PC-3 (cell line): ENCODE measurements at regions of chrX and their contacts with region 1.

Region 1: GRCh38 chrX:111244235-111244750 is 26.0 kb downstream of the CAPN6 start:
- DNase-seq: peak; percentile 10
- ATAC-seq: no peak
- H3K4me3 ChIP-seq: no peak overlapping the region
- H3K27ac ChIP-seq: no peak overlapping the region
- H3K4me1 ChIP-seq: no peaks in the 10 kb centered on the region
- H3K27me3 ChIP-seq: peaks cover 24% of the 10 kb centered on the region
- CTCF ChIP-seq: peak; percentile 60; the same call in 1 of the 2 replicates

Region 2: DNA sequence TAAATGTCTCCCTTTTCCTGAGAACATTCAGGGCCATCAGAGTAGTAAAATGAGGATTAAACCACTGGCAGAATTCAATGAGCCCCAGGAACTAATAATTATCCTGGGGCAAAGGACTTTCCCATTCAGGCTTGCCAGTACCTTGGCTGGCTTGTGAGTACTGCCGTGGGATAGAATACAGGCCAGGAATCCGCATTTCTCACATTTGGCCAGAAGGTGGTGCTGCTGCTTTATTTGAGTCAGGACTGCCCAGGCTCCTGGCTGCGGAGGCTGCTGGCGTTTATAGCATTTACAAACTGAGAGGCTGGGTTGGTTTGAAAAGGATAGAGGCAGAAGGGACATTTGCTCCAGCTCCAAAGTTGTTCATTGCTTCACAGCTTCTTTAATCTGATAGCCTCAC is 794.2 kb before region 1 on chrX:
- CTCF ChIA-PET with region 1: no interaction called
- POLR2A ChIA-PET with region 1: no interaction called
- intact Hi-C with region 1: loop called (anchors 5 kb)
- DNase-seq: peak; percentile 81
- ATAC-seq: peak; percentile 99
- H3K4me3 ChIP-seq: no peak overlapping the region
- H3K27ac ChIP-seq: no peak overlapping the region
- H3K4me1 ChIP-seq: no peaks in the 10 kb centered on the region
- H3K27me3 ChIP-seq: peaks cover 50% of the 10 kb centered on the region
- CTCF ChIP-seq: peak; percentile 78

Region 3: DNA sequence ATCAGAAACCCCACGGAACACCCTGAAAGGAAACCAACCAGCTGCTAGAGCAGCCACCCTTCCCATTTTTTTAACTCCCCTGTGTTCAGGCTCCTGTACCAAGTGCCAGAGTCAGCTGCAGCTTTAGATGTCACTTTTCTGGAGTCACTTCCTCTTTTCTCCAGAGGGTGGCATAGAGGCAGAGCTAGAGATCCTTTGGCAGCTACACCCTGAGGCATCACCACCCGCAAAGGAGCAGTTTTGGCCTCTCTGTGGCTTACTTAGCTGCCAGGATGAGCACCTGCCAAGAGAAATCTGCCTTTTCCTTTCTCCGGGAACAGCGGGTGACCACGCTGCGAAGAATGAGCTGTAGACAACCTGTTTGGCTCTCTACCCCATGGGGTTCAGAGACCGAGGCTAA is 390.7 kb before region 1 on chrX:
- CTCF ChIA-PET with region 1: interaction called, 8 read pairs
- POLR2A ChIA-PET with region 1: no interaction called
- intact Hi-C with region 1: loop called (anchors 5 kb)
- DNase-seq: peak; percentile 54
- ATAC-seq: peak; percentile 71
- H3K4me3 ChIP-seq: no peak overlapping the region
- H3K27ac ChIP-seq: no peak overlapping the region
- H3K4me1 ChIP-seq: no peaks in the 10 kb centered on the region
- H3K27me3 ChIP-seq: no peaks in the 10 kb centered on the region
- CTCF ChIP-seq: peak; percentile 53

Region 4: GRCh38 chrX:110992611-110993010 is 251.7 kb before region 1 on chrX:
- CTCF ChIA-PET with region 1: no interaction called
- POLR2A ChIA-PET with region 1: no interaction called
- intact Hi-C with region 1: loop called (anchors 1 kb)
- DNase-seq: peak; percentile 57
- ATAC-seq: peak; percentile 55
- H3K4me3 ChIP-seq: no peak overlapping the region
- H3K27ac ChIP-seq: no peak overlapping the region
- H3K4me1 ChIP-seq: no peaks in the 10 kb centered on the region
- H3K27me3 ChIP-seq: no peaks in the 10 kb centered on the region
- CTCF ChIP-seq: peak; percentile 65

Region 5: GRCh38 chrX:111098874-111099273 is 145.4 kb before region 1 on chrX:
- CTCF ChIA-PET with region 1: no interaction called
- POLR2A ChIA-PET with region 1: no interaction called
- intact Hi-C with region 1: loop called (anchors 1 kb)
- DNase-seq: peak; percentile 30
- ATAC-seq: no peak
- H3K4me3 ChIP-seq: no peak overlapping the region
- H3K27ac ChIP-seq: no peak overlapping the region
- H3K4me1 ChIP-seq: no peaks in the 10 kb centered on the region
- H3K27me3 ChIP-seq: no peaks in the 10 kb centered on the region
- CTCF ChIP-seq: peak; percentile 66

Region 6: DNA sequence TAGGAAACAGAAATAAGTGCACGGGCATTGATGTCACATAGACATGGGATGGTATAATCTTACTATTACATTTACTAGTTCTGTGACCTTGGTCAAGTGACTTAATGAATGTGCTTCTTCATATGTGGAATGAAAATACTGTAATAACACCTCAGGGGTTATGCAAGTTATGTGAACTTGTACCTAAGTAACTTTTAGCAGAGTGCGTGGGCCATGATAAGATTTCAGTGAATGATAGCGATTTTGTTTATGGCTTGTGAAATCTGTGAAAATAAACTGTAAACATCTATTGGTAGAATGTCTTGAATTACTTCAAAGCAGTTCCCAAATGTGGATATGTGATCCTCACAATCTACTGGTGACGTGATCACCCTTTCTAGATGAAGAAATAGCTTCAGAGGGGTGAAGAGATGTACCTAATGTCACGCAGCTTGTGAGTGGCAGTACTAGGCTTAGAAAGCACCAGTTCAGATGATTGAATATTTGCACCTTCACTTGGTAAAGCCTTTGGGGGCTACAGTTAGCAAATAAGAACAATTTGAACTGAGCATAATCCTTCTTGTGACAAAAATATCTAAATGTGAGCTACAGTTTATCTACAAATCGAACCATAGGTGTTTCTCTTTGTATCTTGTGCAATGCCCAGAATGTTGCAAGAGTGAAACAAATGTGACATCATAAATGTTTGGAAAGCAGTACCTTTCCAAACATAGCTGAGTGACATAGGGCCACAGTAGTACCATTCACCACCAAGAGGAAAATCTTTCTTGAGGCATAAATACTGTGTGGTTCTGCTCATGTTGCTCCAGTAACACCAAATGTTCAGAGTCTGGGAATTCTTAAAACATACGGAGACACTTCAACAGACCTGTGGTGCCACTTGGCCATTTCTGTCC is 134.1 kb before region 1 on chrX:
- CTCF ChIA-PET with region 1: no interaction called
- POLR2A ChIA-PET with region 1: no interaction called
- intact Hi-C with region 1: no loop called
- DNase-seq: no peak
- ATAC-seq: no peak
- H3K4me3 ChIP-seq: no peak overlapping the region
- H3K27ac ChIP-seq: no peak overlapping the region
- H3K4me1 ChIP-seq: no peaks in the 10 kb centered on the region
- H3K27me3 ChIP-seq: no peaks in the 10 kb centered on the region
- CTCF ChIP-seq: no peak

Region 7: DNA sequence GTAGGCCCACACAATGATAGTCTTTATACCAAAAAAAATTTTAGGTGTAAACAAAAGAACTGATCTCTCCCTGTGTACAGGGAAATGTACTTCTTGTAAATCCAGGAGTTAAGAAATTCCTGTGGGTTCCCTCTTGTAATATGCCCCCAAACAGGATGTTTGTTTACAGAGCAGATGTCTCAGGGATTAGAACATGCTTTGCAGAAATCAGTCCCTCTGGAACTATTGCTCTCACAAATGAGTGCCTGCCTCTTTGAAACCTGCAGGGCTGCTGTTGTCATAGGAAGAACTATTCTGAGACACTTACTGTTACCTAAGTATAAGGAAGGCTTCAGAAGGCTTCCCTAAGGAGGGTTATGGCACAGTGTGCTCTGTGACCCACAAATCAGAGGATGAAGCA is 112.7 kb before region 1 on chrX:
- CTCF ChIA-PET with region 1: no interaction called
- POLR2A ChIA-PET with region 1: no interaction called
- intact Hi-C with region 1: no loop called
- DNase-seq: peak; percentile 1
- ATAC-seq: no peak
- H3K4me3 ChIP-seq: no peak overlapping the region
- H3K27ac ChIP-seq: no peak overlapping the region
- H3K4me1 ChIP-seq: no peaks in the 10 kb centered on the region
- H3K27me3 ChIP-seq: no peaks in the 10 kb centered on the region
- CTCF ChIP-seq: no peak

Region 8: GRCh38 chrX:111168314-111168713 is 76.0 kb before region 1 on chrX:
- CTCF ChIA-PET with region 1: no interaction called
- POLR2A ChIA-PET with region 1: no interaction called
- intact Hi-C with region 1: loop called (anchors 1 kb)
- DNase-seq: peak; percentile 10
- ATAC-seq: no peak; the same call in 1 of the 2 replicates
- H3K4me3 ChIP-seq: no peak overlapping the region
- H3K27ac ChIP-seq: no peak overlapping the region
- H3K4me1 ChIP-seq: no peaks in the 10 kb centered on the region
- H3K27me3 ChIP-seq: no peaks in the 10 kb centered on the region
- CTCF ChIP-seq: peak; percentile 48